ENCODE measurements at regions of chr9 and their contacts with region 1.

Region 1: GRCh38 chr9:109574068-109574882 is 76.2 kb upstream of the PTPN3 start:
- DNase-seq: peak; percentile 50 to 77 (median 67)
- H3K4me3 ChIP-seq: no peak overlapping the region
- H3K27ac ChIP-seq: no peak overlapping the region
- H3K4me1 ChIP-seq: no peaks in the 10 kb centered on the region
- H3K27me3 ChIP-seq: peaks cover 0 to 12% (median 6%) of the 10 kb centered on the region in 5 experiments

Region 2: GRCh38 chr9:109652964-109653363 is 78.7 kb after region 1 on chr9:
- CTCF ChIA-PET with region 1: interaction called, 36 read pairs
- POLR2A ChIA-PET with region 1: no interaction called
- DNase-seq: peak; percentile 39 to 73 (median 66)
- H3K4me3 ChIP-seq: no peak overlapping the region
- H3K27ac ChIP-seq: no peak overlapping the region
- H3K4me1 ChIP-seq: no peaks in the 10 kb centered on the region
- H3K27me3 ChIP-seq: peaks cover 2 to 19% (median 5%) of the 10 kb centered on the region in 5 experiments

Region 3: DNA sequence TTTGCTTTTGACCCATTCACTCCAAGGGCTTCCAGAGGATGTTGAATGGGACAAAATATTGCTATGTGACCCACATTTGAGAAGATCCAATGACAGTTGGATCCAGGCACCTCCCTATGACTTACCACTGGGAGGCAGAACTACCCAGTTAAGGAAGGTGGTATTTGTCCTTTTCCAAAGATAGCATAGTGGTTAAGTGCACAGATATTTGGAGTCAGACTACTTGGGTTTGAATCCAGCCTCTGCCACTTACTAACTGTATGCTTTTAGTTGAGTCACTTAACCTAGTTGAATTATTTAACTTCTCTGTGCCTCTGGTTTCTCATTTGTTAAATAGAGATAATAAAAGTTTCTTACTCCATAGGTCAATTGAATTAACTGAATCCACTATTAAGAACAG is 131.2 kb after region 1 on chr9:
- CTCF ChIA-PET with region 1: no interaction called
- POLR2A ChIA-PET with region 1: no interaction called
- DNase-seq: no peak
- H3K4me3 ChIP-seq: no peak overlapping the region
- H3K27ac ChIP-seq: no peak overlapping the region
- H3K4me1 ChIP-seq: no peaks in the 10 kb centered on the region
- H3K27me3 ChIP-seq: peaks cover 0 to 32% (median 16%) of the 10 kb centered on the region in 5 experiments

Region 4: DNA sequence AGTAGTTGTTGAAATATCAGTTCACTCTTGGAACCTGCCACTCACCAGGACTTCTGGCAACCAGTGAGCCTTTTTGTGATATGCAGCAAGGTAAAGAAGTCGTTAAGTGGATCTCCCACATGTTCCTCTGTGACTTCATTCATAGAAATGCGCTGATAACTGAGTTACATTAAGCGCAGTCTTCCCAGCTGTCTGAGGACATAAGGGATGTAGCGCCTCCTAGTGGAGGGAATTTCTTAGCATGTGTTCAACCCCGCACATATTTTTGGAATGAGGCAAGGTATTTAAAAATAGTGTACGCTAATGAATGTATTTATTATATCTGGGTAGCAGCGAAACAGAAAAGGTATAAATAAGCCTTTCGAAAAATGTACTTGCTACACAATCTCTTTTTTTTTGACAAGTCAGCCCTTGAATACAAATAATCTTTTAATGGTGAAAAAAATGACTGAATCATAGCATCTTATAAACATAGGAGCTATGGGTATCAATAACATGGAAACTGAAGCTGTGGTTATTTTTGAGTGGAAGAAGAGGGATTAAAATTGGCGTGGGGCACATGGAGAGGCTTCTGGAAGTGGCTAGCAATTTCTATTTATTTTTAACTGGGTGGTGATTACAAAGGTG is 243.7 kb after region 1 on chr9:
- CTCF ChIA-PET with region 1: interaction called, 41 read pairs
- POLR2A ChIA-PET with region 1: no interaction called
- DNase-seq: peak; percentile 74 to 89 (median 83)
- H3K4me3 ChIP-seq: no peak overlapping the region
- H3K27ac ChIP-seq: no peak overlapping the region
- H3K4me1 ChIP-seq: peaks cover 0 to 4% (median under 1%) of the 10 kb centered on the region in 4 experiments
- H3K27me3 ChIP-seq: peaks cover 0 to 51% (median 14%) of the 10 kb centered on the region in 5 experiments

Measured in common myeloid progenitor, CD34-positive (primary cell).